Left lung (tissue), 14 donors: ENCODE measurements at regions of chr17 and their contacts with region 1.

Region 1: GRCh38 chr17:50949989-50950881 is 84.1 kb upstream of the TOB1 start:
- DNase-seq: peak in 3 of 4 donors; percentile 71 to 92 (median 88)
- ATAC-seq: peak; percentile 86
- H3K4me3 ChIP-seq: peak overlapping the region in 1 of 2 donors; percentile 5
- H3K27ac ChIP-seq: peak overlapping the region; percentile 82 to 85
- H3K4me1 ChIP-seq: peaks cover 24 to 45% of the 10 kb centered on the region in 2 donors
- H3K27me3 ChIP-seq: no peaks in the 10 kb centered on the region
- CTCF ChIP-seq: peak; percentile 63 to 83

Region 2: DNA sequence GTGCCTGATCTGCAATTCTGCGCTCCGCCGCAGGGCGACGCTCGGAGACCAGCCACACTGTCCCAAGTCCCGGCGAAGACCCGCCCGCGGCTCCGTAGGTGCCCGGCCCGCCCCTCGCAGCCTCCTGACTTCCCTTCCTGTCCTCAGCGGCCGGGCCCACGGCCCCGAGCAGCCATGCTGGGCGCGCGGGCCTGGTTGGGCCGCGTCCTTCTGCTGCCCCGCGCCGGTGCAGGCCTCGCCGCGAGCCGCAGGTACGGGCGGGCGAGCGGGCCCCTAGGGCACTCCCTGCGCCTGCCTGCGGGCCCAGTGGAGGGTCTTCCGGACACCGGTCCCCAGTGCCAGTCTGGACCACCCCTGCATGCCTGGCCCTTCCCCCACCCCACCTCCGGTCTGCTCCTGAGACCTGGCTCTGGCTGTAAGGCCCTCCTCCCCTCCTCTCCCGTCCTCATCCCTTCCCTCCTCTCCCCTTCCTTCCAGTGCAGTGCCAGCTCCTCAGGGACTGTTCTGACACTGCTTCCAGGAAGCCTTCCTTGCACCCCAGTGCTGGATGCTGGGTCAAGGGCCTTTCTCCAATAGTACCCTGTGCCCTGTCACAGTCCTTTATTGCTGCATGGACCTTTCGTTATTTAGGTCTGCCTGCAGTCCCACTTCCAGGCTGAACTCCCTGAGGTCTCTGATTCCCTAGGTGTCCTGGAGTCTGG is 403.1 kb before region 1 on chr17 and contains the start of gene SPATA20:
- intact Hi-C with region 1: loop called in 1 of 2 experiments (anchors 10 kb)
- DNase-seq: peak; percentile 83 to 98 (median 93)
- ATAC-seq: peak; percentile 83
- H3K4me3 ChIP-seq: peak within 1 kb of the TSS; percentile 53 to 54
- H3K27ac ChIP-seq: peak within 1 kb of the TSS; percentile 70 to 72
- H3K4me1 ChIP-seq: peaks cover 14 to 30% of the 10 kb centered on the region in 2 donors
- H3K27me3 ChIP-seq: no peaks in the 10 kb centered on the region
- CTCF ChIP-seq: peak; percentile 96 to 99
- polyA plus RNA-seq, gene SPATA20: 41.1 to 60.5 (median 47.7) TPM

Region 3: DNA sequence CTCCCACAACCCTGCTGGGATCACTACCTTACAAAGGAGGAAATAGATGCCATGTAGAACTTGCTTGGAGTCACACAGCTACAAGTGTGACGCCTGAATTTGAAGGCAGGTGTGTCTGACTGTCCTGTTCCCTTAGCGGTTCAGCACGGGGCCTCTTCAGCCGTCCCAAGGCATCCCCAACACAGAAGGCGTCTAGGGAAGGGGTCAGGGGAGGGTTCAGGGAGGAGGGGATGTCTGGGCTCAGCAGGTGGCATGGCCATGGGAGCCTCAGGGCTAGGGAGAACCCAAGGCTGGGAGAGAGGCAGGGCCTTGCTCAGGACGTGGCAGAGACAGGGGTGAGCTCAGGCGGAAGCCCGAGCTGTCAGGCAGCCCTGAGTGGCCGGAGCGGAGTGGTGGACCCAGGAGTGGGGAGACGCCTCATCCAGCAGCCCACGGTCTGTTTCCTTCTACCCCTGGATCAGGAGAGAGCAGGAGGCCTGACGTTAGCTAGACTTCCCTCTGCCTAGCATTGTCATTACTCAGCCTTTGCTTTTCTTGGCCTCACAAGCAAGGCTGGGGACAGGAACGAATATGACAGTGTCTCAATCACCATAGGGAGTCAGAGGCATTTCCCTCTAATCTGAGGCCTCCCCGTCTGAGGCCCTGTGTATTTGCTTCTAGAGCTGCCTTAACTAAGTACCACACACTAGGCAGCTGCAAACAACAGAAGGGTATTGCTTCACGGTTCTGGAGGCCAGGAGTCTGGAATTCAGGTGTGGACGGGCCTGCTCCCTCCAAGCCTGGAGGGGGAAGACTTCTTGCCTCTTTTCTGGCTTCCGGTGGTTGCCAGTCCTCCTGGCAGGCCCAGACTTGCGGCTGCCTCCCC is 151.6 kb before region 1 on chr17:
- intact Hi-C with region 1: loop called in 1 of 2 experiments (anchors 10 kb)
- DNase-seq: no peak
- ATAC-seq: no peak
- H3K4me3 ChIP-seq: no peak overlapping the region
- H3K27ac ChIP-seq: no peak overlapping the region
- H3K4me1 ChIP-seq: no peaks in the 10 kb centered on the region
- H3K27me3 ChIP-seq: no peaks in the 10 kb centered on the region
- CTCF ChIP-seq: no peak

Region 4: GRCh38 chr17:50841949-50842354 is 108.3 kb before region 1 on chr17:
- intact Hi-C with region 1: loop called in 1 of 2 experiments (anchors 10 kb)
- DNase-seq: peak; percentile 59 to 83 (median 73)
- ATAC-seq: peak; percentile 89
- H3K4me3 ChIP-seq: no peak overlapping the region
- H3K27ac ChIP-seq: no peak overlapping the region
- H3K4me1 ChIP-seq: no peaks in the 10 kb centered on the region
- H3K27me3 ChIP-seq: no peaks in the 10 kb centered on the region
- CTCF ChIP-seq: peak; percentile 59 to 81

Region 5: DNA sequence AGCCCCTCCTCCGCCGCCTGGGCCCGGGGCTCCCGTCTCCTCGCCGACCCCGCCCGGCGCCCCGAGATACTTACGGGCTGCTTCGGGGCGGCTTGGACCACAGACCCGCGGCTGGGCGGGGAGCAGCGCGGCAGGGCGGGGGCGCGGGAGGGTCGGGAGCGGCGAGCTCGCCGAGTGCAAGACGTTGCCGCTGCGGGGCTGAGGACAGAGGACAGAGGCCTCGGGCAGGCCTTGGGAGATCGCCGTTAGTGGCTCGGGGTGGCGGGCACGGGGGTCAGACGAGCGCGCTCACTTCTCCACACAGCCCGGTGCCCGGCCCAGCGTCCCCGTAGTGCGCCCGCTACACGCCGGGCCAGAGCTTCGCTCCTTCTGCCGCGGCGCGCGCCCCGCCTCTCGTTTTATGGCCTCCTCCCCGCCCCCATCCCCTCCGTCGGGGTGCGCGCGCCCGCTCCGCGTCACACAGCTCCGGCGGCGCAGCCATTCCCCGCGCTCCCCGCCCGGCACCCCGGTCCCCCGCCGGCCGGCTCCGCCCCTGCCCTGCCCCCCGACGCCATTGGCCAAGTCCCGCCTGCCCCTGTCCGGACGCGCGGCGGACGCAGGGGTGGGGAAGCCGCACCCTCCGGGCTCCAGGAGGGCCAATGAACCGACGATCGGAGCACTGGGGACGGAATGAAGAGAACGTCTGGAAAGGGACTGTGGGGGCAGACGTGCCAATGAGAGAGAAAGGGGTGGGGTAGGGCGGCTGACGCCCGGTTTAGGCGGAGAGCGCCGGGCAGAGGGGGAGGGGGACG is 84.1 kb before region 1 on chr17 and contains the start of gene TOB1:
- intact Hi-C with region 1: loop called in 1 of 2 experiments (anchors 5 kb)
- DNase-seq: peak; percentile 96 to 100 (median 98)
- ATAC-seq: peak; percentile 83
- H3K4me3 ChIP-seq: peak within 1 kb of the TSS; percentile 88
- H3K27ac ChIP-seq: peak within 1 kb of the TSS; percentile 97 to 100
- H3K4me1 ChIP-seq: peaks cover 5 to 44% of the 10 kb centered on the region in 2 donors
- H3K27me3 ChIP-seq: no peaks in the 10 kb centered on the region
- CTCF ChIP-seq: no peak
- polyA plus RNA-seq, gene TOB1: 20.1 to 31.2 (median 28.7) TPM

Region 6: GRCh38 chr17:51000835-51001638 is 50.8 kb after region 1 on chr17:
- intact Hi-C with region 1: no loop called
- DNase-seq: peak in 2 of 4 donors; percentile 51 to 78
- ATAC-seq: peak; percentile 81
- H3K4me3 ChIP-seq: no peak overlapping the region
- H3K27ac ChIP-seq: no peak overlapping the region
- H3K4me1 ChIP-seq: no peaks in the 10 kb centered on the region
- H3K27me3 ChIP-seq: no peaks in the 10 kb centered on the region
- CTCF ChIP-seq: peak; percentile 27 to 37

Region 7: GRCh38 chr17:51071556-51071955 is 121.3 kb after region 1 on chr17:
- intact Hi-C with region 1: no loop called
- DNase-seq: no peak
- ATAC-seq: no peak
- H3K4me3 ChIP-seq: no peak overlapping the region
- H3K27ac ChIP-seq: peak overlapping the region in 1 of 2 donors; percentile 40
- H3K4me1 ChIP-seq: peaks cover 4 to 21% of the 10 kb centered on the region in 2 donors
- H3K27me3 ChIP-seq: no peaks in the 10 kb centered on the region
- CTCF ChIP-seq: no peak

Region 8: GRCh38 chr17:51617881-51618455 is 667.7 kb after region 1 on chr17:
- intact Hi-C with region 1: no loop called
- DNase-seq: no peak
- ATAC-seq: no peak
- H3K4me3 ChIP-seq: no peak overlapping the region
- H3K27ac ChIP-seq: no peak overlapping the region
- H3K4me1 ChIP-seq: no peaks in the 10 kb centered on the region
- H3K27me3 ChIP-seq: no peaks in the 10 kb centered on the region
- CTCF ChIP-seq: no peak